ENCODE measurements at regions of chr6 and their contacts with region 1.

Region 1: GRCh38 chr6:28838634-28839442 is 84.9 kb downstream of the TRIM27 start:
- DNase-seq: peak; percentile 88
- H3K4me3 Mint-ChIP-seq: peak overlapping the region; percentile 92
- H3K27ac Mint-ChIP-seq: peak overlapping the region; percentile 46
- H3K4me1 Mint-ChIP-seq: peaks cover 6% of the 10 kb centered on the region
- H3K27me3 Mint-ChIP-seq: no peaks in the 10 kb centered on the region
- CTCF ChIP-seq: peak; percentile 62

Region 2: DNA sequence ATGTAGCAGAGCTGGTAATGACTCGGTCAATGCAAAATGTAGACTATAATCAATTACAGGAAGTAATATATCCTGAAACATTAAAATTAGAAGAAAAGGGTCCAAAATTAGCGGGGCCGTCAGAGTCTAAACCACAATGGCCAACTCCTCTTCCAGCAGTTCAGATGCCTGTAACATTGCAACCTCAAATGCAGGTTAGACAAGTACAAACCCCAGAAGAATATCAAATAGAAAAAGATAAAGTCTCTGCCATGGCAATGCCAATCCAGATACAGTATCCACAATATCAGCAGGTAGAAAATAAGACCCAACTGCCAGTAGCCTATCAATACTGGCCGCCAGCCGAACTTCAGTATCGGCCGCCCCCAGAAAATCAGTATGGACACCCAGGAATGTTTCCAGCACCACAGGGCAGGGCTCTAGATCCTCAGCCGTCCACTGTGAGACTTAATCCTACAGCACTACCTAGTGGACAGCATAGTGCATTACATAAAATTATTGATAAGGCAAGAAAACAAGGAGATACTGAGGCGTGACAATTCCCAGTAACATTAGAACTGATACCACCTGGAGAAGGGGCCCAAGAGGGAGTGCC is 154.8 kb before region 1 on chr6:
- CTCF ChIA-PET with region 1: interaction called, 6 read pairs
- POLR2A ChIA-PET with region 1: no interaction called
- intact Hi-C with region 1: loop called (anchors 1 kb)
- DNase-seq: peak; percentile 70
- H3K4me3 Mint-ChIP-seq: no peak overlapping the region
- H3K27ac Mint-ChIP-seq: no peak overlapping the region
- H3K4me1 Mint-ChIP-seq: peaks cover 19% of the 10 kb centered on the region
- H3K27me3 Mint-ChIP-seq: no peaks in the 10 kb centered on the region
- CTCF ChIP-seq: peak; percentile 77

Region 3: GRCh38 chr6:28863604-28864320 is 24.9 kb after region 1 on chr6:
- CTCF ChIA-PET with region 1: interaction called, 21 read pairs
- POLR2A ChIA-PET with region 1: interaction called, 37 read pairs
- intact Hi-C with region 1: loop called (anchors 1 kb)
- DNase-seq: peak; percentile 81
- H3K4me3 Mint-ChIP-seq: peak overlapping the region; percentile 93
- H3K27ac Mint-ChIP-seq: peak overlapping the region; percentile 53
- H3K4me1 Mint-ChIP-seq: peaks cover 14% of the 10 kb centered on the region
- H3K27me3 Mint-ChIP-seq: no peaks in the 10 kb centered on the region
- CTCF ChIP-seq: peak; percentile 7

Region 4: GRCh38 chr6:28923318-28924102 is 84.7 kb after region 1 on chr6 and contains the start of gene TRIM27:
- CTCF ChIA-PET with region 1: interaction called, 10 read pairs
- POLR2A ChIA-PET with region 1: interaction called, 43 read pairs
- intact Hi-C with region 1: loop called (anchors 5 kb)
- DNase-seq: peak; percentile 92
- H3K4me3 Mint-ChIP-seq: peak within 1 kb of the TSS; percentile 93
- H3K27ac Mint-ChIP-seq: peak within 1 kb of the TSS; percentile 88
- H3K4me1 Mint-ChIP-seq: peaks cover 19% of the 10 kb centered on the region
- H3K27me3 Mint-ChIP-seq: no peaks in the 10 kb centered on the region
- CTCF ChIP-seq: no peak
- total RNA-seq, gene TRIM27: 68.8 and 68.9 TPM in 2 replicates

Region 5: DNA sequence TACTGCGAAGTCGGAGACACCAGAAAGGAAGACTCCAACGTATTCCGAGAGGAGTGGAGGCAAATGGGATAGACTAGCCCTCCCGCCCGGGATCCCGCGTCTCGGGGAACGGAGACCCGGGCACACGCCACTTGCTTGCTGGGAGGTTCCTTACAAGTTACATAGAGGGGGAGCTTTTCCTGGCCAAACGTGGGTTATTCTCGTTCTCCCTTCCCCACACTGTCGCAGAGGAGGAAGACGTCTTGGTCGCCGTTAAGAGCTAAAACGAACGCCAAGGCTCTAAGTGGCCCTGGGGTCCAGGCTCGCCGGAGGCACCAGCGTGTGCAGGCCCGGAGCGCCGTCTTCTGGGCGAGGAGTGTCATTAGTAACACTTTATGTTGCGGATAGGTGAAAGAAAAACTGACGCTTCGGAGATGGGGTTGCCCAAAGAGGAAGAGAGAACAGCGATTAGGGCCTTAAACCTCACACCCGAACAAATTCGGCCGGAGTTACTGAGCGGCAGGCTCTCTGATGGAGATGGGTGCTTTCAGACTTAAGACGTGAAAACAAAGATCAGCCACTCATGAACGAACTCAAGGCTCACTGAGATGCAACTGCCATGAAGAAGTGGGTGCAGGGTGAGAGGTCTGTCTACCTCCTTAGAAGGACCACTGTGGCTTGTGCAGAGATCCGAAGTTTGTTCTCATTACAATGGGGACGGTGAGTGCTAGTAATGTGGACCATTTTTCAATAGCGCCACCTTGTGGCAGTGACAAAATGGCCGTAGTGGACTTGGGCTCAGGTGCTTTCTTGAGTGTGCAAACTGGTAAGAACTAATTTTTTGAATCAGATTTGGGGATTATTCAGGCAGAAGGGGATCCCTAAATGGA is 178.0 kb after region 1 on chr6:
- CTCF ChIA-PET with region 1: interaction called, 56 read pairs
- POLR2A ChIA-PET with region 1: interaction called, 12 read pairs
- intact Hi-C with region 1: loop called (anchors 1 kb)
- DNase-seq: peak; percentile 89
- H3K4me3 Mint-ChIP-seq: peak overlapping the region; percentile 69
- H3K27ac Mint-ChIP-seq: no peak overlapping the region
- H3K4me1 Mint-ChIP-seq: peaks cover 12% of the 10 kb centered on the region
- H3K27me3 Mint-ChIP-seq: peaks cover 4% of the 10 kb centered on the region
- CTCF ChIP-seq: peak; percentile 79